ENCODE measurements at regions of chr2 and their contacts with region 1.

Region 1: GRCh38 chr2:154537843-154538450 is 160.5 kb upstream of the KCNJ3 start:
- DNase-seq: no peak
- H3K4me3 ChIP-seq: no peak overlapping the region
- CTCF ChIP-seq: no peak
- POLR2A ChIP-seq: no peak

Region 2: GRCh38 chr2:154484338-154485099 is 53.4 kb before region 1 on chr2:
- intact Hi-C with region 1: no loop called
- DNase-seq: no peak
- H3K4me3 ChIP-seq: no peak overlapping the region
- CTCF ChIP-seq: no peak
- POLR2A ChIP-seq: no peak

Region 3: GRCh38 chr2:154577390-154577789 is 39.4 kb after region 1 on chr2:
- intact Hi-C with region 1: loop called (anchors 2 kb)
- DNase-seq: no peak
- H3K4me3 ChIP-seq: no peak overlapping the region
- CTCF ChIP-seq: no peak
- POLR2A ChIP-seq: no peak

Measured in lower leg skin (tissue), 4 donors.